PC-3 (cell line): ENCODE measurements at regions of chr15 and their contacts with region 1.

Region 1: GRCh38 chr15:80436511-80437307 is 32.5 kb downstream of the ARNT2 start:
- DNase-seq: peak; percentile 93
- ATAC-seq: peak; percentile 99
- H3K4me3 ChIP-seq: no peak overlapping the region
- H3K27ac ChIP-seq: peak overlapping the region; percentile 82
- H3K4me1 ChIP-seq: peaks cover 18% of the 10 kb centered on the region
- H3K27me3 ChIP-seq: no peaks in the 10 kb centered on the region
- CTCF ChIP-seq: no peak

Region 2: GRCh38 chr15:80424381-80424780 is 12.3 kb before region 1 on chr15:
- CTCF ChIA-PET with region 1: no interaction called
- POLR2A ChIA-PET with region 1: no interaction called
- intact Hi-C with region 1: loop called (anchors 1 kb)
- DNase-seq: peak; percentile 97
- ATAC-seq: peak; percentile 99
- H3K4me3 ChIP-seq: no peak overlapping the region
- H3K27ac ChIP-seq: peak overlapping the region; percentile 76
- H3K4me1 ChIP-seq: peaks cover 20% of the 10 kb centered on the region
- H3K27me3 ChIP-seq: no peaks in the 10 kb centered on the region
- CTCF ChIP-seq: no peak